OCI-LY7 (cell line): ENCODE measurements at regions of chr2 and their contacts with region 1.

Region 1: DNA sequence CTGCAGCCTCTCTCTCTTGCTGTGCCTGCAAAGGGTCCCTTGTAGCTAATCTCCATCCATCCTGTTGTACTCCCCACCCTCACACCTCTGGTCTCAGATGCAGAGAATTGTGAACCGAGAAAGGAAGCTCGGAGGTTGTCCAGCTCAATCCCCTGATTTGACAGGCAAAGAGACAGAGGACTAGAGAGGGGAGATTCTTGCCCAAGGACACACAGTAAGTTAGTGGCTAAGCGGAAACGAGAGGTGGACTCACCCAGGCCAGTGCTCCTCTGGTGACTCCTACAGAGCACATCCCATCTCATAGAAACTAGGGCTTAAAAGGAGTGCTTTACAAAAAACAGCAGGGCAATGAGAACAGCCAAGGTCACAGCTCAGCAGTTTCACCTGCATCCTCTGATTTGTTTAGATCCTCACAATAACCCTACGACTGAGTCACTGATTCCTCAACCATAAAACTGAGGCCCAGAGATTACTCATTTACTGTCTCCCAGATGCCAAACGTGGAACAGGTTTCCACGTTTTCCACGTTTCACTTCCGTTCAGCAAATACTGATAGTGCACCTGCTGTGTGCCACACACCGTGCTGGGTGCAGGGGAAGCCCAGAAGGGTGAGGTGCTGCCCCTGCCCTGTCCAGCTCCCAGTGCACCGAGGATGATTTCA is 22.1 kb downstream of the EHD3 start:
- DNase-seq: peak; percentile 87
- H3K4me3 ChIP-seq: peak overlapping the region; percentile 61
- H3K27ac ChIP-seq: peak overlapping the region; percentile 95
- H3K4me1 ChIP-seq: peaks cover 86% of the 10 kb centered on the region
- CTCF ChIP-seq: no peak

Region 2: GRCh38 chr2:29940706-29941105 is 1315.3 kb before region 1 on chr2:
- CTCF ChIA-PET with region 1: no interaction called
- POLR2A ChIA-PET with region 1: interaction called, 14 read pairs
- intact Hi-C with region 1: no loop called
- DNase-seq: no peak
- H3K4me3 ChIP-seq: no peak overlapping the region
- H3K27ac ChIP-seq: no peak overlapping the region
- H3K4me1 ChIP-seq: no peaks in the 10 kb centered on the region
- CTCF ChIP-seq: no peak

Region 3: GRCh38 chr2:30287857-30288513 is 968.1 kb before region 1 on chr2:
- CTCF ChIA-PET with region 1: no interaction called
- POLR2A ChIA-PET with region 1: no interaction called
- intact Hi-C with region 1: loop called (anchors 10 kb)
- DNase-seq: peak; percentile 70
- H3K4me3 ChIP-seq: peak overlapping the region; percentile 45
- H3K27ac ChIP-seq: peak overlapping the region; percentile 76
- H3K4me1 ChIP-seq: peaks cover 33% of the 10 kb centered on the region
- CTCF ChIP-seq: no peak

Region 4: DNA sequence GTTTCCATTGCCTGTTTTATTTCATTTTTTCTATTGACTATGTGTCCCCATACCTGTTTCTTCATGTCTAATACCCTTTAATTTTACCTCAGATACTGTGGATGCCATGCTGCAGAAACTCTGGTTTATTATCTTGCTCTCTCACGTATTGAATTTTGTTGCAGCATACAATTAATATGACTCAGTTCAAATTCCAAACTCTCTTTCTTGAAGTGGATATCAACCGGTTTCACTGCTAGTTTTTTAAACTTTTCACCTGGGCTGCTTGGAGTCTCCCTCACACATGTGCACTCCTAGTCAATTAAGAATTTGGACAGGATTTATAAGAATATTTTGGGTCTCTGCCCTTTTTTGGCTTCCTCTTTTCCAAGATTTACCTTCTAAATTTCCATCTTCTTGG is 378.2 kb before region 1 on chr2:
- CTCF ChIA-PET with region 1: no interaction called
- POLR2A ChIA-PET with region 1: no interaction called
- intact Hi-C with region 1: no loop called
- DNase-seq: no peak
- H3K4me3 ChIP-seq: no peak overlapping the region
- H3K27ac ChIP-seq: no peak overlapping the region
- H3K4me1 ChIP-seq: no peaks in the 10 kb centered on the region
- CTCF ChIP-seq: no peak

Region 5: GRCh38 chr2:31138037-31138962 is 117.7 kb before region 1 on chr2 and contains the start of gene GALNT14:
- CTCF ChIA-PET with region 1: no interaction called
- POLR2A ChIA-PET with region 1: interaction called, 4 read pairs
- intact Hi-C with region 1: loop called (anchors 2 kb)
- DNase-seq: peak; percentile 87
- H3K4me3 ChIP-seq: peak within 1 kb of the TSS; percentile 80
- H3K27ac ChIP-seq: peak within 1 kb of the TSS; percentile 30
- H3K4me1 ChIP-seq: peaks cover 30% of the 10 kb centered on the region
- CTCF ChIP-seq: peak; percentile 75
- total RNA-seq, gene GALNT14: 13.5 and 14.8 TPM in 2 replicates

Region 6: GRCh38 chr2:31233741-31234682 is 22.0 kb before region 1 on chr2 and contains the start of gene EHD3:
- CTCF ChIA-PET with region 1: interaction called, 9 read pairs
- POLR2A ChIA-PET with region 1: interaction called, 4 read pairs
- intact Hi-C with region 1: loop called (anchors 1 kb)
- DNase-seq: peak; percentile 93
- H3K4me3 ChIP-seq: peak within 1 kb of the TSS; percentile 68
- H3K27ac ChIP-seq: no peak within 1 kb of the TSS
- H3K4me1 ChIP-seq: peaks cover 48% of the 10 kb centered on the region
- CTCF ChIP-seq: peak; percentile 69
- total RNA-seq, gene EHD3: 0.73 and 0.98 TPM in 2 replicates

Region 7: DNA sequence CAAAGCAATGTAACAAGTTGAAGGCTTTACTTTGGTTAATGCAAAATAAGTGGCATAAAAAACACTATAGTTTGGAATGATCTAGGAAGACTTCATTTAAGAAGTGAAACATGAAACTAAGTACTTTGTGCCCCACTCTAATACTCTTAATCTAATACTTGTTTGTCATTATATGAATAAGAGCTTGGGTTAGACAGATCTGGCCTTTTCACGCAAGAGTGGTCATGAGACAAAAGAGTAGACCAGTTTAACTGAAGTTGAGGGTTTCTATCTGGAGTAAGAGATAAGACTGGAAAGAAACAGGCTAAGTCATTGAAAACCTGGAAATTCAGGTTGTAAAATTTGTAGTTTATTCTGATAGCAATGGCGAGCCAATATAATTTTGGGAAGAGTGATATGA is 912.5 kb after region 1 on chr2:
- CTCF ChIA-PET with region 1: no interaction called
- POLR2A ChIA-PET with region 1: interaction called, 3 read pairs
- intact Hi-C with region 1: loop called (anchors 10 kb)
- DNase-seq: peak; percentile 28
- H3K4me3 ChIP-seq: peak overlapping the region; percentile 8
- H3K27ac ChIP-seq: peak overlapping the region; percentile 4
- H3K4me1 ChIP-seq: peaks cover 30% of the 10 kb centered on the region
- CTCF ChIP-seq: no peak